HepG2 (cell line): ENCODE measurements at regions of chr6 and their contacts with region 1.

Region 1: DNA sequence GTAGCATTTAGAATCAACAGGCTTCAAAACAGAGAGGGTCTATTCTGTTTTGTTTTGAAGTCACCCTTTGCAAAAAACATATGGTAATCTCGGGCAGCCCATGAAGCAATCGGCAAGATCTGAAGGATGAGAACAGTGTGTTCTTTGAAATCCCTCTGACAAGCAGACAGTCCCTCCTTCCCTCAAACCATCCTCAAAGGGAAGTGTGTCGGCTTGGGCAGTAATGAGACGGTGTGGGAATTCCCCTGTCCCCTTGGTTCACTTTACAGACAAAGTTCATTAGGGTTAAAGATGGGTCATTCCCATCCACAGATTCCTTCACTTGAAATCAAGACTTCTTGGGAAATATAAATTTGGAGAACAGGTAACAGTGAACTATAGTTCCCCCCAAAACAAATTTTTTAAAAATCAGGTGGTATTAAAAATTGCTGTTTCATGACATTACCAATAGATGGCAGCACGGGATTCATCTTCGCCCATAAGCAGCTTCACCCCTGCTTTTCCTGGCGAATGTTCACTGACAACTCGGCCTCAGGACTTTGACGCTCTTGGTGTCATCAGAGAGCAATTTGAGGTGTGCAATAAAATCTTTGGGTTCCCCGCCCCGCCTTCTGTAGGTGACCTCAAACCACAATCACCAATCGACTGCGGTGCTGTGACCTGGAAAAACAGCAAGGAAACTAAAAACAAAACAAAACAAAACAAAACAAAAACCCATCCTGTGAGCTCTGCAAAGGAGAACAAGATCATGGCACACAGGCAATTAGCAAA is 159.3 kb upstream of the TNFAIP3 start:
- DNase-seq: peak; percentile 99
- ATAC-seq: peak; percentile 87
- H3K4me3 ChIP-seq: no peak overlapping the region
- H3K27ac ChIP-seq: peak overlapping the region; percentile 62
- H3K4me1 ChIP-seq: peaks cover 80% of the 10 kb centered on the region
- H3K27me3 ChIP-seq: no peaks in the 10 kb centered on the region
- CTCF ChIP-seq: peak; percentile 91
- EP300 ChIP-seq: peak; percentile 89 to 97; a peak in 3 of 4 replicates
- POLR2A ChIP-seq: no peak
- RAD21 ChIP-seq: peak; percentile 98

Region 2: GRCh38 chr6:137271245-137272183 is 436.3 kb before region 1 on chr6:
- CTCF ChIA-PET with region 1: no interaction called
- POLR2A ChIA-PET with region 1: no interaction called
- in situ Hi-C with region 1: no loop called
- intact Hi-C with region 1: loop called (anchors 5 kb)
- DNase-seq: peak; percentile 75
- ATAC-seq: peak; percentile 85
- H3K4me3 ChIP-seq: no peak overlapping the region
- H3K27ac ChIP-seq: no peak overlapping the region
- H3K4me1 ChIP-seq: no peaks in the 10 kb centered on the region
- H3K27me3 ChIP-seq: no peaks in the 10 kb centered on the region
- CTCF ChIP-seq: peak; percentile 88
- EP300 ChIP-seq: no peak
- POLR2A ChIP-seq: no peak
- RAD21 ChIP-seq: peak; percentile 94

Region 3: GRCh38 chr6:137722749-137723272 is 15.0 kb after region 1 on chr6:
- CTCF ChIA-PET with region 1: interaction called, 9 read pairs
- POLR2A ChIA-PET with region 1: interaction called, 16 read pairs
- in situ Hi-C with region 1: no loop called
- intact Hi-C with region 1: loop called (anchors 1 kb)
- DNase-seq: no peak
- ATAC-seq: peak; percentile 10
- H3K4me3 ChIP-seq: no peak overlapping the region; a peak in 1 of 6 replicates
- H3K27ac ChIP-seq: peak overlapping the region; percentile 98
- H3K4me1 ChIP-seq: peaks cover 71% of the 10 kb centered on the region
- H3K27me3 ChIP-seq: no peaks in the 10 kb centered on the region
- CTCF ChIP-seq: no peak
- EP300 ChIP-seq: no peak
- POLR2A ChIP-seq: no peak
- RAD21 ChIP-seq: no peak

Region 4: GRCh38 chr6:137794516-137795201 is 86.9 kb after region 1 on chr6:
- CTCF ChIA-PET with region 1: no interaction called
- POLR2A ChIA-PET with region 1: interaction called, 7 read pairs
- in situ Hi-C with region 1: no loop called
- intact Hi-C with region 1: loop called (anchors 1 kb)
- DNase-seq: peak; percentile 99
- ATAC-seq: peak; percentile 88
- H3K4me3 ChIP-seq: peak overlapping the region; percentile 5 to 47 (median 5); a peak in 2 of 6 replicates
- H3K27ac ChIP-seq: peak overlapping the region; percentile 98
- H3K4me1 ChIP-seq: peaks cover 96% of the 10 kb centered on the region
- H3K27me3 ChIP-seq: no peaks in the 10 kb centered on the region
- CTCF ChIP-seq: peak; percentile 20; the same call in 1 of the 2 replicates
- EP300 ChIP-seq: peak; percentile 86 to 99; a peak in 3 of 4 replicates
- POLR2A ChIP-seq: no peak
- RAD21 ChIP-seq: peak; percentile 77

Region 5: DNA sequence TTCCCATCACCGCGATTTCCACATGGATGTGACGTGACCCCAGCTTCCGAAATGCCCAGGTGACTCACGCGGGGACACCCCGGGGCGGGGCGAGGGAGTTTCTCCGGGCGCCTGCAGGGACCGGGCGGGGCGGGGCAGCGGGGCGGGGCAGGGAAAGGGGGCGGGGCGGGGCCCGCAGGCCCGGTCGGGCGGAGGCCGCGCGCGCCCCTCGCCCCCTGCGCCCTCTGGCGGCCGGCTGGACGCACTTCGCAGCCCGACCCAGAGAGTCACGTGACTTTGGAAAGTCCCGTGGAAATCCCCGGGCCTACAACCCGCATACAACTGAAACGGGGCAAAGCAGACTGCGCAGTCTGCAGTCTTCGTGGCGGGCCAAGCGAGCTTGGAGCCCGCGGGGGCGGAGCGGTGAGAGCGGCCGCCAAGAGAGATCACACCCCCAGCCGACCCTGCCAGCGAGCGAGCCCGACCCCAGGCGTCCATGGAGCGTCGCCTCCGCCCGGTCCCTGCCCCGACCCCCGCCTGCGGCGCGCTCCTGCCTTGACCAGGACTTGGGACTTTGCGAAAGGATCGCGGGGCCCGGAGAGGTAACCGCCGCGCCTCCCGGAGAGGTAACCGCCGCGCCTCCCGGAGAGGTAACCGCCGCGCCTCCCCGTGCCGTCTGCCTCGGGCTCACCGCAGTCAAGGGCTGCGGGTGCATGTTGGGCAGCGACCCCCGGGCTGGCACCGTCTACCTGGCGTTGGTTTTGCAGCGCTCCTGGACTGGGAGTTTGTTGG is 159.3 kb after region 1 on chr6 and contains the start of gene TNFAIP3:
- CTCF ChIA-PET with region 1: interaction called, 102 read pairs
- POLR2A ChIA-PET with region 1: interaction called, 19 read pairs
- in situ Hi-C with region 1: loop called (anchors 5 kb)
- intact Hi-C with region 1: loop called (anchors 1 kb)
- DNase-seq: peak; percentile 94
- ATAC-seq: peak; percentile 85
- H3K4me3 ChIP-seq: peak within 1 kb of the TSS; percentile 75 to 100 (median 92)
- H3K27ac ChIP-seq: peak within 1 kb of the TSS; percentile 92
- H3K4me1 ChIP-seq: peaks cover 75% of the 10 kb centered on the region
- H3K27me3 ChIP-seq: no peaks in the 10 kb centered on the region; a peak in 1 of 5 replicates
- CTCF ChIP-seq: peak; percentile 85
- EP300 ChIP-seq: peak in 1 of 2 experiments; percentile 71; a peak in 2 of 4 replicates
- POLR2A ChIP-seq: peak; percentile 88 to 95
- RAD21 ChIP-seq: peak; percentile 99
- total RNA-seq, gene TNFAIP3: 24.7 and 28.2 TPM in 2 replicates

Region 6: DNA sequence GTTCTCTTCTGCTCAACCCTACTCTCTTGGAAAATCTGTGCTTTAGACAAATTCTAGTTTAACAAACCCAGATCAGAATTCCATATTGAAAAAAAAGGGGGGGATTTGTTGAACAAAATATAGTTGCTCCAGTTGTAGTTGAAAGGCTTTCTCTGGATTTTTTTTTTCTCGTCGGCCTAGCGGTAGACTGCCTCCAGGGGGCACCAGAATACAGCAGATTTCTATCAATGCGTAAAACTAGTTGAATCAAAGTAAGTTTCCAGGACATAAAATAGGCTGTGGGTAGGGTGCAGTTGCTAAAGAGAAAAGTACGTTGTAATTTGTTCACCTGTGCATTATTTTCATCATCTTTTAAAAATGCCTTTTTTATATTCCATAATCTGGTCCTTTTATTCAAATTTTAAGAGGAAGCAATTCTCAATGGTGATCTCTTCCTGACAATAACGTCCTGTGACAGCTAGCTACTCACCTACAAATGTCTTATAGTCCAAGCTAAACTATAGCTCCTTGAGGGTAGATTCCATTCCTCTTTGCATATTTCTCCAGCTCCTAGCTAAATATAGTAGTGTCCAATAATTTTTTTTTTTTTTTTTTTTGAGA is 294.1 kb after region 1 on chr6:
- CTCF ChIA-PET with region 1: interaction called, 7 read pairs
- POLR2A ChIA-PET with region 1: no interaction called
- in situ Hi-C with region 1: no loop called
- intact Hi-C with region 1: loop called (anchors 1 kb)
- DNase-seq: peak; percentile 44
- ATAC-seq: peak; percentile 51
- H3K4me3 ChIP-seq: no peak overlapping the region
- H3K27ac ChIP-seq: no peak overlapping the region
- H3K4me1 ChIP-seq: 0 out of 2 replicates have a peak, but pooled peaks cover 6% of the 10 kb centered on the region
- H3K27me3 ChIP-seq: no peaks in the 10 kb centered on the region
- CTCF ChIP-seq: peak; percentile 88
- EP300 ChIP-seq: no peak
- POLR2A ChIP-seq: no peak
- RAD21 ChIP-seq: peak; percentile 87